Posterior vena cava (tissue), 2 donors: ENCODE measurements at regions of chr9 and their contacts with region 1.

Region 1: DNA sequence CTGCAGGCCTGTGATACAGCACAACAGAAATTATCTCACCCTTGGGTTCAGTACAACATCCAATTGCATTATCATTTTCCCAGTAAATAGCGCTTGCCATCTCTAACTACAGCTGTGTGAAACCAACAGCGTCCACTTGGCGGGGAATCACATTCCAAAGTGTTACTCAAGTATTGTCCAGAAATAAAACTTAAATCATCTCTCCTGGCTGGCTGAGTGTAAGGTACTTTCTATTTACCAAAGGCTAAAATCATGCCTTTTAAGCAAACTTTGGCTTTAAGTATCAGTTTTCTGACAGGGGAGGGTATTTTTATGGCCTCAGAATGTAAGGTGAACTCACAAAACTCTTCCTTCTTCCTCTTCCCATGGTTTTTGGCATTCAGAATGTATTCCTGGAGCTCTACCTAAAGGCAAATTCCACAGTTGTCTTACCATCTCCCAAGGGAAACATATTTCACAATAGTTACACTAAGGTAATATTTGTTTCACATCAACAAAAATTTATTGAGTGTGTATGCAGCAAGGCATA is 205.6 kb upstream of the MPDZ start:
- DNase-seq: peak; percentile 81

Region 2: GRCh38 chr9:13358128-13358527 is 127.0 kb before region 1 on chr9:
- intact Hi-C with region 1: loop called in 1 of 2 experiments (anchors 5 kb)
- DNase-seq: no peak

Region 3: GRCh38 chr9:13570068-13570974 is 85.2 kb after region 1 on chr9:
- intact Hi-C with region 1: loop called in 1 of 2 experiments (anchors 5 kb)
- DNase-seq: no peak